ENCODE measurements at regions of chr2 and their contacts with region 1.

Region 1: DNA sequence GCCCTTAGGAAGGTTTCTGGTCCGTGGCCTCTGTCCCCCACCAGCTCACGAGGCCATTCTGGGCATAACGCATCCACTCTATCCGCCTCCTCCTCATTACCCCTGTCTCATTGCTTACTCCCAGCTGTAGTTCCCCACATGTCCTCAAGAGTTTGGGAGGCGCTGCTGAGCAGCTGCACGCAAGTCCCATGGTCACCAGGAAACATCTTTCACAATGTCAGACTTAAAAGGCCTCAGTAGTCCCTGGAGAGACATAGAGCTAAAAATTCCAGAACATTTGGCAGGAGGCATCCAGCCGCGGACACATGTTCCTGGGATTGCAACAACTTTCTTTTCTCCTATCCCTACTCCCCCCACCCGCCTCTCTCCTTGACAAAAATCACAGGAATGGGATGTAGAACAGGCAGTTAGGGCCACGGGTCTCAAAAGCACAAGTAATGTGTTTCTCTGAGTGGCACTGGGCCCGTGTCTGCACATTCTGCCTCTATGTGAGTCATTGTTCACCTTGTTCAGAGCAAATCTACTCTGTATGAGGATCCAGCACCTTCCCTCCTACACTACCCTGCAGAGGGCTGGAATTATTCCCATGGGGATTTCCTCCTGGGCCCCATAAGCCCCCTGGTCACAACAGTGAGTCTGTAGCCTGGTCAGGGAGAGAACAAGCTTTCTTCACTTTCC is 8.1 kb downstream of the LBH start:
- DNase-seq: peak; percentile 67
- ATAC-seq: peak; percentile 50
- H3K4me3 ChIP-seq: peak overlapping the region; percentile 1; the same call in 1 of the 2 replicates
- H3K27ac ChIP-seq: peak overlapping the region; percentile 63; the same call in 1 of the 2 replicates
- H3K4me1 ChIP-seq: peaks cover 51% of the 10 kb centered on the region
- H3K27me3 ChIP-seq: no peaks in the 10 kb centered on the region
- CTCF ChIP-seq: peak; percentile 81
- POLR2A ChIP-seq: no peak
- RAD21 ChIP-seq: peak; percentile 70

Region 2: GRCh38 chr2:30208452-30208851 is 31.0 kb before region 1 on chr2:
- CTCF ChIA-PET with region 1: interaction called, 4 read pairs
- POLR2A ChIA-PET with region 1: interaction called, 15 read pairs
- dilution Hi-C with region 1: no loop called
- in situ Hi-C with region 1: no loop called
- intact Hi-C with region 1: no loop called
- DNase-seq: peak; percentile 82
- ATAC-seq: peak; percentile 99
- H3K4me3 ChIP-seq: no peak overlapping the region
- H3K27ac ChIP-seq: no peak overlapping the region
- H3K4me1 ChIP-seq: peaks cover 2% of the 10 kb centered on the region; the same call in 1 of the 2 replicates
- H3K27me3 ChIP-seq: 0 out of 2 replicates have a peak, but pooled peaks cover 3% of the 10 kb centered on the region
- CTCF ChIP-seq: peak; percentile 95
- POLR2A ChIP-seq: peak; percentile 63
- RAD21 ChIP-seq: peak; percentile 98

Region 3: GRCh38 chr2:30293303-30293921 is 54.0 kb after region 1 on chr2:
- CTCF ChIA-PET with region 1: interaction called, 5 read pairs
- POLR2A ChIA-PET with region 1: interaction called, 3 read pairs
- dilution Hi-C with region 1: no loop called
- in situ Hi-C with region 1: no loop called
- intact Hi-C with region 1: loop called (anchors 2 kb)
- DNase-seq: peak; percentile 100
- ATAC-seq: peak; percentile 88
- H3K4me3 ChIP-seq: no peak overlapping the region
- H3K27ac ChIP-seq: peak overlapping the region; percentile 95
- H3K4me1 ChIP-seq: peaks cover 19% of the 10 kb centered on the region
- H3K27me3 ChIP-seq: no peaks in the 10 kb centered on the region
- CTCF ChIP-seq: no peak
- POLR2A ChIP-seq: peak; percentile 63
- RAD21 ChIP-seq: peak; percentile 47

Region 4: GRCh38 chr2:30472326-30472725 is 232.9 kb after region 1 on chr2:
- CTCF ChIA-PET with region 1: no interaction called
- POLR2A ChIA-PET with region 1: no interaction called
- dilution Hi-C with region 1: no loop called
- in situ Hi-C with region 1: no loop called
- intact Hi-C with region 1: loop called (anchors 5 kb)
- DNase-seq: no peak
- ATAC-seq: no peak; the same call in 1 of the 2 replicates
- H3K4me3 ChIP-seq: no peak overlapping the region
- H3K27ac ChIP-seq: no peak overlapping the region
- H3K4me1 ChIP-seq: no peaks in the 10 kb centered on the region
- H3K27me3 ChIP-seq: no peaks in the 10 kb centered on the region
- CTCF ChIP-seq: 0 out of 2 replicates have a peak, but pooled peaks have one; percentile 5
- POLR2A ChIP-seq: no peak
- RAD21 ChIP-seq: no peak

Region 5: DNA sequence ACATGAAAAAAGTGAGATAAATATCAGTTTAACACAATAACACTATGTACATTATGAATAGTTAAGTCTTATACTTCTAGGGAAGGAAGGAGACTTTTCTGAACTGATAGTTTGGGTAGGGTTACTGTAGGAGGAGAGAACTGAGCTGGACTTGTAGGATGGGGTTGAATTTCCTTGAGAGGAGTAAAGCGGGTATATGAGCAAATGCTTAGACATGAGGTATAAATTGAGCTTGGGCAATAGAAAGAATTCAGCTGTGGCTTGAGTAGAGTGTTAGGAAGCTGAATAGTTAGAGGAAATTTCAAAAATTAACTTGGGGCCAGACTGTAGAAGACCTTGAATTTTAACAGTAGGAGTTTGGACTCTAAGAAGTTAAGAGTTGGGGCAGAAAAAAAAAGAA is 252.7 kb after region 1 on chr2:
- CTCF ChIA-PET with region 1: no interaction called
- POLR2A ChIA-PET with region 1: interaction called, 15 read pairs
- dilution Hi-C with region 1: no loop called
- in situ Hi-C with region 1: no loop called
- intact Hi-C with region 1: no loop called
- DNase-seq: peak; percentile 32
- ATAC-seq: no peak
- H3K4me3 ChIP-seq: no peak overlapping the region
- H3K27ac ChIP-seq: no peak overlapping the region
- H3K4me1 ChIP-seq: peaks cover 11% of the 10 kb centered on the region
- H3K27me3 ChIP-seq: no peaks in the 10 kb centered on the region
- CTCF ChIP-seq: no peak
- POLR2A ChIP-seq: no peak
- RAD21 ChIP-seq: no peak

Measured in IMR-90 (cell line).